ENCODE measurements at regions of chr15 and their contacts with region 1.

Region 1: GRCh38 chr15:43913026-43913927 is 86.5 kb downstream of the WDR76 start:
- DNase-seq: peak in 4 of 5 donors; percentile 42 to 79 (median 56)
- ATAC-seq: peak; percentile 86 to 97 (median 94)
- H3K4me3 ChIP-seq: no peak overlapping the region
- H3K27ac ChIP-seq: peak overlapping the region in 10 of 12 donors; percentile 32 to 91 (median 74)
- H3K4me1 ChIP-seq: peaks cover 0 to 51% (median 15%) of the 10 kb centered on the region in 12 donors
- H3K27me3 ChIP-seq: no peaks in the 10 kb centered on the region
- CTCF ChIP-seq: no peak
- POLR2A ChIP-seq: no peak

Region 2: DNA sequence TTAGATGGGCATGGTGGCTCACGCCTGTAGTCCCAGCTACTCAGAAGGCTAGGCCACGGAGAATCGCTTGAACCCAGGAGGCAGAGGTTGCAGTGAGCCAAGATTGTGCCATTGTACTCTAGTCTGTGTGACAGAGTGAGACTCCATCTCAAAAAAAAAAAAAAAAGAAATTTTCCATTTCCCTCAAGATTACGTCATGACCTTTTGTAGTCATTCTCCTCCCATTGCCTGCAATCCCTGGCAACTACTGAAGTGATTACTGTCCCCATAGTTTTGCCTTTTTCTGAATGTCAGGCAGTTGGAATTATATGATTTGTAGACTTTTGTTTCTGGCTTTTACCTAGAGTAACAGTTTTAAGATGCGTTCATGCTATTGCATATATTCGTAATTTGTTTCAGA is 58.5 kb before region 1 on chr15:
- intact Hi-C with region 1: no loop called
- DNase-seq: no peak
- ATAC-seq: no peak
- H3K4me3 ChIP-seq: no peak overlapping the region
- H3K27ac ChIP-seq: no peak overlapping the region
- H3K4me1 ChIP-seq: no peaks in the 10 kb centered on the region
- H3K27me3 ChIP-seq: no peaks in the 10 kb centered on the region
- CTCF ChIP-seq: no peak
- POLR2A ChIP-seq: no peak

Region 3: GRCh38 chr15:43954181-43954621 is 40.9 kb after region 1 on chr15:
- intact Hi-C with region 1: loop called in 1 of 10 experiments (anchors 2 kb)
- DNase-seq: no peak
- ATAC-seq: peak in 2 of 4 donors; percentile 16 to 20
- H3K4me3 ChIP-seq: no peak overlapping the region
- H3K27ac ChIP-seq: no peak overlapping the region
- H3K4me1 ChIP-seq: peaks cover 0 to 7% (median 0%) of the 10 kb centered on the region in 12 donors
- H3K27me3 ChIP-seq: peaks cover 0 to 2% (median 0%) of the 10 kb centered on the region in 9 donors
- CTCF ChIP-seq: no peak
- POLR2A ChIP-seq: no peak

Region 4: GRCh38 chr15:43977072-43977884 is 64.0 kb after region 1 on chr15:
- intact Hi-C with region 1: no loop called
- DNase-seq: no peak
- ATAC-seq: no peak
- H3K4me3 ChIP-seq: no peak overlapping the region
- H3K27ac ChIP-seq: no peak overlapping the region
- H3K4me1 ChIP-seq: peaks cover 0 to 15% (median 0%) of the 10 kb centered on the region in 12 donors
- H3K27me3 ChIP-seq: peaks cover 0 to 4% (median 0%) of the 10 kb centered on the region in 9 donors
- CTCF ChIP-seq: no peak
- POLR2A ChIP-seq: no peak

Region 5: GRCh38 chr15:44033894-44034293 is 120.6 kb after region 1 on chr15:
- intact Hi-C with region 1: loop called in 4 of 10 experiments (anchors 10 kb)
- DNase-seq: no peak
- ATAC-seq: no peak
- H3K4me3 ChIP-seq: no peak overlapping the region
- H3K27ac ChIP-seq: no peak overlapping the region
- H3K4me1 ChIP-seq: peaks cover 0 to 36% (median 3%) of the 10 kb centered on the region in 12 donors
- H3K27me3 ChIP-seq: no peaks in the 10 kb centered on the region
- CTCF ChIP-seq: no peak
- POLR2A ChIP-seq: no peak

Region 6: DNA sequence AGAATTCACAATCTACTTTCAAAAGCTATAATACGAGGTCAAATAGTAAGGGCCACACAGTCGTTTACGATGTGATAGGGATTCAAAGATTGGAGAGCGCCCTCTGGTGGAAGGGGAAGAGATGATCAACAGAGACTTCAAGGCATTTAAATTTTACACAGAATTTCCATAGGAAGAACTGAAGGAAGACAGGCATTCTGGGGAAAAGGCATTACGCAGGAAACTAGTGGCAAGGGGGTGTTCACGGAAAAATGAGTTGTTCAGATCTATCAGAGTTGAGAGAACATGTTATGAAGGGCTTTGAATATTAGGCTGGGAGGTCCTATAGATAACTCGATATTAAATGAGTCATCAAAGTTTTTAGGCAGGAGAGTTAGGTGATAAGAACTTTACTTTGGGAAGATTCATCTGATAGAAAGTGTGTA is 153.1 kb after region 1 on chr15:
- intact Hi-C with region 1: loop called in 1 of 10 experiments (anchors 5 kb)
- DNase-seq: peak in 4 of 5 donors; percentile 31 to 42 (median 36)
- ATAC-seq: peak in 2 of 4 donors; percentile 50 to 59
- H3K4me3 ChIP-seq: no peak overlapping the region
- H3K27ac ChIP-seq: no peak overlapping the region
- H3K4me1 ChIP-seq: no peaks in the 10 kb centered on the region
- H3K27me3 ChIP-seq: peaks cover 0 to 3% (median 0%) of the 10 kb centered on the region in 9 donors
- CTCF ChIP-seq: peak; percentile 54 to 77 (median 68)
- POLR2A ChIP-seq: no peak

Region 7: GRCh38 chr15:44215594-44215993 is 302.3 kb after region 1 on chr15:
- intact Hi-C with region 1: loop called in 7 of 10 experiments (anchors 5 to 10 kb)
- DNase-seq: no peak
- ATAC-seq: no peak
- H3K4me3 ChIP-seq: no peak overlapping the region
- H3K27ac ChIP-seq: no peak overlapping the region
- H3K4me1 ChIP-seq: no peaks in the 10 kb centered on the region
- H3K27me3 ChIP-seq: peaks cover 0 to 16% (median 0%) of the 10 kb centered on the region in 9 donors
- CTCF ChIP-seq: no peak
- POLR2A ChIP-seq: no peak

Measured in heart left ventricle (tissue), 16 donors.